A549 (cell line): ENCODE measurements at regions of chr11 and their contacts with region 1.

Region 1: DNA sequence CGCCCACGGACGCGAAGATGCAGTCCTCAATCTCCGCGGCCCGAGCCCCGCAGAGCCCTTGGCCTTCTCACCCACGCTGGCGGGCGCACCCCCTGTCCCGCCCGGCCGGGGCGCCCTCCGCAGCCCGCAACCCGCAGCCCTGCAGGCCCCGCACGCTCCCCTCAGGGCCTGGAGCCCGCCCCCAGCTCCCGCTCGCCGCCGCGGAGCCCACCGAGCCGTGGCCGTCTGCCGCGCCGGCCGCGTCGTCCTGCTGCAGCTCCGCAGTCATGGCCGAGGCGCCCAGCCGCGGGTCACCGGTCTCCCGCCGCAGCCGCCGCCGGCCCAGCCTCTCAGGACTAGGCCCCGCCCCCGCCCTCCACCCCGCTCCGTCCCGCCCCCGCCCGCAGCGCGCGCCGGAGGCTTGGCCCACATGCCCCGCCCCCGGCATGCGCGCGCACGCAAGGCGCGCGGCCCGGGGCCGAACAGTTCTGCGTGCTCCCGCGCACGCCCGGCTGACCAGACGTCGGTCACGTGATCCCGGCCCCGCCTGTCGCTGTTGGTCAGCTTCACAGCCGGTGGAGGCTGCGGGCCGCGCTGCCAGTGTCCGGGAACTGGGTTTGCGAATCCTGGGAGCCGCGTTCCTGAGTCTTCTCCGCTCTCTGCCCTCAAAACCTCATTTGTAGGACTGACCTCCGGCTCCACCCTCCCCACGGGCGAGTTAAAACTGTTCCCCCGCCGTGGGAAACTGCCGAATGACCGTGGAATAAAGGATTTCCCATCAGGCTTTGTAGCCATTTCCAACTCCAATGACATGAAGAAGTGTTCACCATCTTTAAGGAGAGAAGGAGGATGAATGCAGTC is at the start of gene USP28:
- DNase-seq: peak; percentile 91 to 93
- ATAC-seq: peak; percentile 94 to 97
- H3K4me3 ChIP-seq: peak within 1 kb of the TSS; percentile 81
- H3K27ac ChIP-seq: peak within 1 kb of the TSS; percentile 95 to 96
- H3K4me1 ChIP-seq: peaks cover 11% of the 10 kb centered on the region; the same call in 2 of the 3 replicates
- CTCF ChIP-seq: no peak
- EP300 ChIP-seq: no peak
- POLR2A ChIP-seq: peak; percentile 88
- RAD21 ChIP-seq: no peak
- polyA plus RNA-seq, gene USP28: 31.3 and 41.7 TPM in 2 replicates

Region 2: DNA sequence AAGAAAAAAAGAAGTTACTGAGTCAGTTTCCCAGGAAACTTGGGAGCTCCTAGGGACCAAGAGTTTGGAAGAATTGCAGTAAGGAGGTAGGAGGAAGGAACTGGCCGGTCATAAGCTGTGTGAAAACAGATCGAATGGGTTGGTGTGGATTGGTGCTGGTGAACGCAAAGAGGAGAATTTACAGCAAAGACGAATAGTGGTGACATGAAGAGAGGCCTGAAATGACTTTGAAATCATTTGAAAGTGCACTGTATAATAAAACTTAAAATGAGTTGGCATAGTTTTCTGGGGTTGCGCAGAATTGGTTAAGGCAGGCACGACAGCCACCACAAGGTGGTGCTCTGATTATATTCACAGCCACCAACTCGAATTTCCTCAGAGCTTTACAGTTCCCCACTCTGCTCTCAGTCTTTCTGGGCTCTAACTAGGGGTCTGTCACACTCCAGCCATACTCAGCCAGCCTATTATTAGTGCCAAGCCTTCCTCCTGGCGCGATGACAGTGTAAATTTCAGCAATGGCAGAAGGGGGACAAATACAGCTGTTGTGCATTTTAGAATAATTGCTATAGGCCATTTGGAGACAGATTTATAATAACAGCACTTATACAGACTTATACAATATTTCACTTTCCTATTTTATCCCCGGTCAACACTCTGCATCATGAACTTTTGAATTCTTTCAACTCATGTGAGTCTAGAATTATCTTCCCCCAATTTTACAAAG is 20.9 kb after region 1 on chr11:
- CTCF ChIA-PET with region 1: interaction called, 15 read pairs
- POLR2A ChIA-PET with region 1: interaction called, 7 read pairs
- DNase-seq: peak; percentile 15 to 22
- ATAC-seq: peak; percentile 88 to 91
- H3K4me3 ChIP-seq: no peak overlapping the region
- H3K27ac ChIP-seq: no peak overlapping the region
- H3K4me1 ChIP-seq: no peaks in the 10 kb centered on the region
- CTCF ChIP-seq: peak; percentile 66
- EP300 ChIP-seq: no peak
- POLR2A ChIP-seq: no peak
- RAD21 ChIP-seq: peak; percentile 60 to 64

Region 3: DNA sequence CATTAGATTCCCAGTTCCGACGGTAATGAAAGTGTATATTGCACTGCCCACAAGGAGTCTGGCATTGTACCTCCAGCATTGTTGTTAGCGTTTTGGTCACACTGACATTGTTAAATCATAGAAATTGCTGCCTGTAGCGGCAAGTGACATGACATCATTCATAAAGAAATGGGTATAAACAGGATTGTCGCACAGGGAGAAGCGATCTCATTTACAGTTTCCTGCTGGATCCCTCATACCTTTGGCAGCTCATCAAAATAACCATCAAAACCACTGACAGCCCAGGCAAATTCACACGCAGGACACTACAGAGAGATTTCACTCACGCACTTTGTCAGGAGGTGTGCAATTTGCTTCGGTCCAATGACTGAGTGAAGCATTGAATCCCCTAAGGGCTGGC is 32.6 kb after region 1 on chr11:
- CTCF ChIA-PET with region 1: no interaction called
- POLR2A ChIA-PET with region 1: no interaction called
- DNase-seq: no peak
- ATAC-seq: no peak
- H3K4me3 ChIP-seq: no peak overlapping the region
- H3K27ac ChIP-seq: no peak overlapping the region
- H3K4me1 ChIP-seq: peaks cover 8% of the 10 kb centered on the region; the same call in 2 of the 3 replicates
- CTCF ChIP-seq: no peak
- EP300 ChIP-seq: no peak
- POLR2A ChIP-seq: no peak
- RAD21 ChIP-seq: no peak